B cell (primary cell): ENCODE measurements at regions of chr15 and their contacts with region 1.

Region 1: DNA sequence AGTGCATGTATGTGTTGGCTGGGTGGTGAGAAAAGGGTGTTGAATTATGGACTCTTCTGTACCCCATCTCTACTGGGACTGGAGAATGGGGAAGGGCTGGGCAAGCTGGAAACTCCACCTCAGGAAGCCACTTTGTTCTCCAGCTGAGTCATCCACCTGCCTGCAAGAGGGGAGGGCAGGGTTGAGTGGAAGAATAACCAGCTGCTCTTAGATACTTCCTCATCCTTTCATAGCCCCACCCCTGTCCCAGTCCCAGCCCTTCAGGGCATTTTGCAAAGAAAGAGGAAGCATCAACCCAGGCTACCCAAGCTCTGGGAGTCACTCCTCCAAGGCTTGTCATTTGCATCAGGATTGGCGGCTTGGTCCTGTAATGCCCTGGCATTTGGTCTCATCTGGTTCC is 33.1 kb downstream of the RAB11A start:
- DNase-seq: peak; percentile 81
- ATAC-seq: peak; percentile 98
- H3K4me3 ChIP-seq: no peak overlapping the region
- H3K4me3 Mint-ChIP-seq: peak overlapping the region; percentile 41
- H3K27ac ChIP-seq: peak overlapping the region in 1 of 2 donors; percentile 32
- H3K27ac Mint-ChIP-seq: peak overlapping the region; percentile 68
- H3K4me1 ChIP-seq: peaks cover 22 to 37% of the 10 kb centered on the region in 2 donors
- H3K4me1 Mint-ChIP-seq: peaks cover 38% of the 10 kb centered on the region
- H3K27me3 ChIP-seq: no peaks in the 10 kb centered on the region
- H3K27me3 Mint-ChIP-seq: no peaks in the 10 kb centered on the region
- CTCF ChIP-seq: no peak

Region 2: DNA sequence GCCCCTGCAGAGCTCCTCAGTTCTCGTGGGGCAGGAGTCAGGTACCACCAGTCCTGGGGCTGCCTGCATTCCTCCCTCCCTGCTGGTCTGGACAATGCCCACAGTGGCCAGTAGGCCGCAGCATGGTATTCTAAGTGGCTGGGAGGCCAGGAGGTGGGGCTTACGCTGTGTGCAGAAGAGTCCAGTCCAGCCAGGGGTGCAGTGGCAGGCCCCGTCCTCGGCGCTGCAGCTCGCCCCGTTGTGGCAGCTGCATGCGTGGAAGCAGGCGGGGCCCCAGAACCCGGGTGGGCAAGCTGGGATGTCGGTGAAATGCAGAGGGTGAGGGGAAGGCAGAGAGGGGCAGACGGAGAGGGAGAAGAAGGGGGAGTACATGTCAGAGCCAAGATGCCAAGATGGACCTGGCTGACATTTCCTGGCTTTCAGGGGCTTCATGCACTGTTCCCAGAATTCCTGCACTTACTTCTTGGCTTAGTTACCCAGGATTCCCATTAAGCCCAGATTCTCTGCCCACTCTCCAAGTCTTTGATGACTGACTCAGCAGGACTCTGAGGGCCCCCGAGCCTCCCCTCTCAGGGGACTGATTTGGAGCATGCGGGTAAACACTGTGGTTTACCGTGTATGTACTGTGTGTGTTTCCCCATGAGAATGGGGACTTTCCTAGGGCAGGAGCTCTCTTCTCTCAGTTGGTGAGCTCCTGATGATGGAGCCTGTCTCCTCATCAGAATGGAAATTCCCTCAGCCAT is 14.5 kb after region 1 on chr15:
- CTCF ChIA-PET with region 1: interaction called, 5 read pairs
- POLR2A ChIA-PET with region 1: interaction called, 3 read pairs
- intact Hi-C with region 1: loop called (anchors 1 kb)
- DNase-seq: peak; percentile 86
- ATAC-seq: peak; percentile 89
- H3K4me3 ChIP-seq: peak overlapping the region in 1 of 5 experiments; percentile 17
- H3K4me3 Mint-ChIP-seq: peak overlapping the region; percentile 72
- H3K27ac ChIP-seq: peak overlapping the region in 1 of 2 donors; percentile 73
- H3K27ac Mint-ChIP-seq: peak overlapping the region; percentile 73
- H3K4me1 ChIP-seq: peaks cover 69 to 70% of the 10 kb centered on the region in 2 donors
- H3K4me1 Mint-ChIP-seq: peaks cover 70% of the 10 kb centered on the region
- H3K27me3 ChIP-seq: no peaks in the 10 kb centered on the region
- H3K27me3 Mint-ChIP-seq: no peaks in the 10 kb centered on the region
- CTCF ChIP-seq: no peak

Region 3: GRCh38 chr15:66014635-66015182 is 112.3 kb after region 1 on chr15:
- CTCF ChIA-PET with region 1: no interaction called
- POLR2A ChIA-PET with region 1: no interaction called
- intact Hi-C with region 1: no loop called
- DNase-seq: no peak
- ATAC-seq: no peak
- H3K4me3 ChIP-seq: no peak overlapping the region
- H3K4me3 Mint-ChIP-seq: no peak overlapping the region
- H3K27ac ChIP-seq: no peak overlapping the region
- H3K27ac Mint-ChIP-seq: no peak overlapping the region
- H3K4me1 ChIP-seq: no peaks in the 10 kb centered on the region
- H3K4me1 Mint-ChIP-seq: no peaks in the 10 kb centered on the region
- H3K27me3 ChIP-seq: no peaks in the 10 kb centered on the region
- H3K27me3 Mint-ChIP-seq: peaks cover 41% of the 10 kb centered on the region
- CTCF ChIP-seq: no peak